ENCODE measurements at regions of chr1 and their contacts with region 1.

Region 1: DNA sequence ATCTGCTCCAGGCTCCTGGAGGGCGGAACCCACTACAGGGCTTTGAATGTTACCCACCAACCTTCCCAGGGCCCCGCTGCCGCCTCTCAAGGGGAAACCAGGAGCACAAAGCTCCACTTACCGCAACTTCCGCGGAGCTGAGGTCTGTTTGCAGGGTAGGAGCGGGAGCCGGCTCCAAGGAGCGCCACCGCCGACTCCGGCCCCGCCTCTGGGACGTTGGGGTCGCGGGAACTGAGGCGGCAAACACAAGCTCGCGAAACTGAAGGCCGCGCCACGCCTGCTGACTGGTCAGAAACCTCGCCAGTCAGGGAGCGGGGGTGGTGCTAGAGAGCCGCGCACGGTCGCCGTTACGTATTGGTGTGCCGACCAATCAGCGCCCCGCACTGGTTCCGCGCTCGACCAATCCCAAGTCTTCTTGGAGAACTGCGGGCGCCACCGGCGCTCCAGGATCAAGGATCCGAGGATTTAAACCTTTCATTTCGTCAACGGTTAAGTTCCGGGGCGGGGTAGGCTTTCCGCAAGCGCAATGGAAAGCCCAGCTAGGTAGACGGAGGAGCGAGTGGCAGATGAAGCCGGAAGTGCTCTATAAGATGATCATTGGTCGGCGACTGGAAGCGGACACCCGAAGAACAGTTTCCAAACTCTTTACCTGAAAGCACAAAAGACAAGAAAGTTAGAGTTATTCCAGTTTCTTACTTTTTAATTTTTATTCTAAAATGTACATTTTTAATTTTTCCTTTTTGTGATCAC is at the start of gene STIL:
- DNase-seq: peak; percentile 100
- H3K4me3 ChIP-seq: peak within 1 kb of the TSS; percentile 53 to 94 (median 92)
- H3K27ac ChIP-seq: peak within 1 kb of the TSS; percentile 81
- H3K4me1 ChIP-seq: peaks cover 10% of the 10 kb centered on the region
- H3K27me3 ChIP-seq: no peaks in the 10 kb centered on the region
- CTCF ChIP-seq: no peak
- POLR2A ChIP-seq: peak; percentile 62
- total RNA-seq, gene STIL: 24.7 and 28.1 TPM in 2 replicates

Region 2: GRCh38 chr1:47104816-47105215 is 209.3 kb before region 1 on chr1:
- CTCF ChIA-PET with region 1: no interaction called
- POLR2A ChIA-PET with region 1: no interaction called
- dilution Hi-C with region 1: no loop called
- intact Hi-C with region 1: no loop called
- DNase-seq: no peak
- H3K4me3 ChIP-seq: no peak overlapping the region
- H3K27ac ChIP-seq: no peak overlapping the region
- H3K4me1 ChIP-seq: peaks cover 10% of the 10 kb centered on the region
- H3K27me3 ChIP-seq: peaks cover 0 to 6% of the 10 kb centered on the region in 2 experiments
- CTCF ChIP-seq: no peak
- POLR2A ChIP-seq: no peak

Region 3: DNA sequence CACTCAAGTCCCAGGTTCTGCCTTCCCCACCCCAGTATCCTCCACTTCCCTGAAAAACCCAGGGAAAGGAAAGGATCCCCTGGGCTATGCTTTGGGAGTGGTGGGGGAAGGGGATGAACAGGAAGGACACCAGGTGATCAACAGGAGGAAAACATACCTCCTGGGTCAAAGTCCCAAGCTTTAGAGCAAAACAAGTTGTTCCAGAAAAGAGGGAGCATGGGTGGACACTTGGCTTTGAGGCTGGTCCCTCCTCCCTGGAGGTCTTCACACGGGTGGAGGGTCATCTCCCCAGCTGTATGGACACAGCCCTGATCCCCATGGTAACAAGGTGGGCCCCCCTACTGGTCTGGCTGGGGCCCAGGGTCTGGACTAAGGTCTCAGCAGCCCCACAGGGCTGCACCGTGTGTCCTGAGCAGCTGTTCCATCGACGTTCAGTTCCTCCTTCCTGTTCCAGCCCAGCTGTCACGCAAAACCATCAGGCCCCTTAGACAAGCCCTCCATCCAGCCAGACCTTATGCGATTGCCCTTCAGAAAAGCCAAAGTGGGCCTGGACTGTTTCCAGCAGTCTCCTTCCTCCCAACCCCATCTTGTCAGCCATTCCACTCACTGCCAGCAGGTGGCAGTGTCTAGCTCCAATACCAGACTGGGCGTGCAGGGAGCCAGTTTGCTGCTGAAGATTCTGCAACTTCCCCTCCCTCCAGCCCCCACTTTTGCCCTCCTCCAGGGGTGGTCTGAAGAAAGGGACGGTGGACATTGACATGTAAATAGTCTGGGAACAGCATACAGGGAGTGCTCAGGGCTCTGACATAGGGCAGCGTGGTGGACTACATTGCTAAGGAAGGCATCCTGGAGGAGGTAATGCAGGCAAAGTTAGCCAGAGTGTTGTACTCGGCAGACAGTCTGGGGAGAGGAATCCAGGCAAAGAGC is 121.4 kb before region 1 on chr1:
- CTCF ChIA-PET with region 1: interaction called, 11 read pairs
- POLR2A ChIA-PET with region 1: interaction called, 3 read pairs
- dilution Hi-C with region 1: no loop called
- intact Hi-C with region 1: loop called (anchors 1 kb)
- DNase-seq: peak; percentile 76
- H3K4me3 ChIP-seq: no peak overlapping the region
- H3K27ac ChIP-seq: no peak overlapping the region
- H3K4me1 ChIP-seq: peaks cover 5% of the 10 kb centered on the region
- H3K27me3 ChIP-seq: no peaks in the 10 kb centered on the region
- CTCF ChIP-seq: peak; percentile 94 to 97
- POLR2A ChIP-seq: no peak

Region 4: DNA sequence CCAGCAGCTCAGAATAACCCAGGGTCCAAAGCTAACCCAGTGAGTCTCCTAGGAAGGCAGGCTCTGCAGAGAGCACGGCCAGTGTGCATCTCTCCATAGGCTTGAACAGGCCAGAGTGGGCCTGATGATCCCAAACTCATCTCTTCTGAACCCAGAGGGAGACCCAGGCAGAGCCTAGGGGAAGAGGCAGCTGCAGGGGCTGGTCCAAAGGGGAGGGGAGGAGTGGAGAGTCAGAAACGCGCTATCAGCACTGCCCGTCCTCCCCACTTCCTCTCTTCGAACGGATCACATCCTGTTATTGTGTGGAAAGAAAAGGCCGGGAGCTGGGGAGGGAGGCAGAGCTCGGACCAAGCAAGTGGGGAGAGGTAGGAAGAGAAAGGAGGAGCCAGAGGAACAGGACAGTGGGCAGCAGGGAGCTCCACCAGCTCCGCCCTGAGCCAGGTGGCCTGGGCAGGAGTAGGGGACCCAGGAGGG is 102.3 kb before region 1 on chr1:
- CTCF ChIA-PET with region 1: no interaction called
- POLR2A ChIA-PET with region 1: no interaction called
- dilution Hi-C with region 1: no loop called
- intact Hi-C with region 1: loop called (anchors 1 kb)
- DNase-seq: peak; percentile 96
- H3K4me3 ChIP-seq: no peak overlapping the region
- H3K27ac ChIP-seq: peak overlapping the region; percentile 92
- H3K4me1 ChIP-seq: peaks cover 58% of the 10 kb centered on the region
- H3K27me3 ChIP-seq: no peaks in the 10 kb centered on the region
- CTCF ChIP-seq: no peak
- POLR2A ChIP-seq: peak; percentile 87

Region 5: GRCh38 chr1:47231301-47232186 is 82.5 kb before region 1 on chr1:
- CTCF ChIA-PET with region 1: no interaction called
- POLR2A ChIA-PET with region 1: interaction called, 5 read pairs
- dilution Hi-C with region 1: no loop called
- intact Hi-C with region 1: loop called (anchors 1 kb)
- DNase-seq: peak; percentile 75
- H3K4me3 ChIP-seq: peak overlapping the region; percentile 62 to 94 (median 81)
- H3K27ac ChIP-seq: peak overlapping the region; percentile 77
- H3K4me1 ChIP-seq: peaks cover 53% of the 10 kb centered on the region
- H3K27me3 ChIP-seq: no peaks in the 10 kb centered on the region
- CTCF ChIP-seq: no peak
- POLR2A ChIP-seq: peak; percentile 76

Region 6: GRCh38 chr1:47298025-47298699 is 15.9 kb before region 1 on chr1:
- CTCF ChIA-PET with region 1: interaction called, 3 read pairs
- POLR2A ChIA-PET with region 1: no interaction called
- dilution Hi-C with region 1: no loop called
- intact Hi-C with region 1: loop called (anchors 2 kb)
- DNase-seq: peak; percentile 21
- H3K4me3 ChIP-seq: no peak overlapping the region
- H3K27ac ChIP-seq: no peak overlapping the region
- H3K4me1 ChIP-seq: no peaks in the 10 kb centered on the region
- H3K27me3 ChIP-seq: no peaks in the 10 kb centered on the region
- CTCF ChIP-seq: no peak
- POLR2A ChIP-seq: no peak

Region 7: GRCh38 chr1:47333922-47334764 is 20.1 kb after region 1 on chr1:
- CTCF ChIA-PET with region 1: interaction called, 20 read pairs
- POLR2A ChIA-PET with region 1: interaction called, 21 read pairs
- dilution Hi-C with region 1: no loop called
- intact Hi-C with region 1: loop called (anchors 1 kb)
- DNase-seq: peak; percentile 78
- H3K4me3 ChIP-seq: peak overlapping the region; percentile 85 to 94 (median 89)
- H3K27ac ChIP-seq: peak overlapping the region; percentile 87
- H3K4me1 ChIP-seq: peaks cover 28% of the 10 kb centered on the region
- H3K27me3 ChIP-seq: no peaks in the 10 kb centered on the region
- CTCF ChIP-seq: peak in 1 of 2 donors; percentile 17
- POLR2A ChIP-seq: peak; percentile 47

Region 8: GRCh38 chr1:47424336-47424982 is 110.4 kb after region 1 on chr1:
- CTCF ChIA-PET with region 1: no interaction called
- POLR2A ChIA-PET with region 1: no interaction called
- dilution Hi-C with region 1: no loop called
- intact Hi-C with region 1: loop called (anchors 5 kb)
- DNase-seq: peak; percentile 29
- H3K4me3 ChIP-seq: no peak overlapping the region
- H3K27ac ChIP-seq: no peak overlapping the region
- H3K4me1 ChIP-seq: no peaks in the 10 kb centered on the region
- H3K27me3 ChIP-seq: peaks cover 7 to 13% of the 10 kb centered on the region in 2 experiments
- CTCF ChIP-seq: peak; percentile 72 to 83
- POLR2A ChIP-seq: no peak

Measured in endothelial cell of umbilical vein (primary cell).